Posterior cingulate gyrus (tissue), 11 donors: ENCODE measurements at regions of chr2 and their contacts with region 1.

Region 1: DNA sequence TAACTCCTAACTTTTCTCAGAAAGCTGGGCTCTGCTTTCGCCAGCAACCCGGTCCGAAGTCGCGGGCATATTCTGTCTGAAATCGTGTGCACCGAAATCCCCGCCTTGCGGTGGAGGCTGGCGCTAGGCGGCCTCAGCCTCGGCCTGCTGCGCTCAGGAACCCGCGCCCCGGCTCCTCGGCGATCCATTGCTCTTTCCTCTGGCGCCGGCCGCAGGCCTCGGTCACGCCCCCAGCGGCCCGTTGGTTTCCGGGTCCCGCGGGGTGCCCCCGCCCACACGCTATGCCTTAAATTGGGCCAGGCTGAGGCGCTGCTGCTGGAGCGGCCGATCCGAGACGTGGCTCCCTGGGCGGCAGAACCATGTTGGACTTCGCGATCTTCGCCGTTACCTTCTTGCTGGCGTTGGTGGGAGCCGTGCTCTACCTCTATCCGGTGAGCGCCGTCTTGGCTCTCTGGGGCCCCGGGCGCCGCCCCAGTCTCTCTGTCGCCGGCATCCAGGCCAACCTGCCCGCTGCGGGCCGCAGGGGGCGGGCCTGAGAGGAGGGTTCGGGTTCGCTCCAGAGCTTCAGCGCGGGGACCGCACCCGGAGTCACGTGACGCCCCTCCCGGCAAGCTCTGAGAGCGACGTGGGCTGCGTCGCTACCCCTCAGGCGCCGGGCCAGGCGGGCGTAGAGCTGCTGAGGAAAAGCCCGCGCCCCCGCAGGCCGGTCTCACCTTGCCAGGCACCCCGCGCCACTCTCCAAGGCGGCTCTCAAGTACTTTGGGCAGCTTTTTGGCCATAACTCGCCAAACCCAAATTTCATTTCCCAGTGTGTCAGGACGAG is at the start of gene CYP20A1:
- DNase-seq: peak; percentile 90 to 99 (median 93)

Region 2: GRCh38 chr2:203201426-203201825 is 37.5 kb before region 1 on chr2:
- intact Hi-C with region 1: no loop called
- DNase-seq: no peak

Region 3: DNA sequence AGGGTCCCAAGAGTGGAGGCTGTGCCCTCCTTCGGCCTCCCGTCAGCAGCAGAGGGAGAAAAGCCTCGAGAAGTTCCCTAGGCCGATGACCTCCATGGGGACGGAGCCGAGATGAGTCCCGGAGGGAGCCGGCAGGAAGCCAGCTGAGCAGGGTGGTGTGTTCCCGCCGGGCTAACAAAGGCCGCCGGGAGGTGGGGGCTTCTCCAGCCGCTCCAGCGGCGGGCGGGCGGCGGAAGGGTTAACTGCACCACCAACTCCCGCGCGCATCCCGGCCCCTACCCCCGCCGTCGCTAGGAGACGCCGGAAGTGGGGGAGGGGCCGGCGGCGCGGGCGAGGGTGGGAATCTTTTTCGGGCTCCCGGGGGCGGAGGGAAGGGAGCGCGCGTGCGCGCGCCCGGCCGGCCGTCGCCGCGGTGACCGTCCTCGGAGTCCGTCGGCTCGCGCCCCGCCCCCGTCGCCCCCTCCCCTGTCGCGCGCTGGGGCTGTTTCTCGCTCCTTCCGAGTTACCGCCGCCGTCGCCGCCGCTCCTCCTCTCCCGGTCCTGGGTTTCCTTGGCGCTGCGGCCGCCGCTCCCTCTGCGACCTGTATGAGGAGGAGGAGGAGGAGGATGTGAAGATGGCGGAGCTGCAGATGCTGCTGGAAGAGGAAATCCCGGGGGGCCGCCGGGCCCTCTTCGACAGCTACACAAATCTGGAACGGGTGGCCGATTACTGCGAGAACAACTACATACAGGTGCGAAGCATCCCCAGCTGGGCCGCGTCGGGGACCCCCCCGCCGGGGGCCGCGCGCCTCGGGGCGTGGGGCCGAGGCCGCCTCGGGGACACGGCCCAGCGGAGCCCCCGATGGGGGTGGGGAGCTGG is 89.2 kb after region 1 on chr2 and contains the start of gene ABI2:
- intact Hi-C with region 1: loop called (anchors 1 kb)
- DNase-seq: peak; percentile 78 to 98 (median 86)

Region 4: GRCh38 chr2:203453858-203454451 is 215.0 kb after region 1 on chr2:
- intact Hi-C with region 1: loop called (anchors 2 kb)
- DNase-seq: peak in 1 of 10 donors; percentile 20